ENCODE measurements at regions of chr12 and their contacts with region 1.

Region 1: DNA sequence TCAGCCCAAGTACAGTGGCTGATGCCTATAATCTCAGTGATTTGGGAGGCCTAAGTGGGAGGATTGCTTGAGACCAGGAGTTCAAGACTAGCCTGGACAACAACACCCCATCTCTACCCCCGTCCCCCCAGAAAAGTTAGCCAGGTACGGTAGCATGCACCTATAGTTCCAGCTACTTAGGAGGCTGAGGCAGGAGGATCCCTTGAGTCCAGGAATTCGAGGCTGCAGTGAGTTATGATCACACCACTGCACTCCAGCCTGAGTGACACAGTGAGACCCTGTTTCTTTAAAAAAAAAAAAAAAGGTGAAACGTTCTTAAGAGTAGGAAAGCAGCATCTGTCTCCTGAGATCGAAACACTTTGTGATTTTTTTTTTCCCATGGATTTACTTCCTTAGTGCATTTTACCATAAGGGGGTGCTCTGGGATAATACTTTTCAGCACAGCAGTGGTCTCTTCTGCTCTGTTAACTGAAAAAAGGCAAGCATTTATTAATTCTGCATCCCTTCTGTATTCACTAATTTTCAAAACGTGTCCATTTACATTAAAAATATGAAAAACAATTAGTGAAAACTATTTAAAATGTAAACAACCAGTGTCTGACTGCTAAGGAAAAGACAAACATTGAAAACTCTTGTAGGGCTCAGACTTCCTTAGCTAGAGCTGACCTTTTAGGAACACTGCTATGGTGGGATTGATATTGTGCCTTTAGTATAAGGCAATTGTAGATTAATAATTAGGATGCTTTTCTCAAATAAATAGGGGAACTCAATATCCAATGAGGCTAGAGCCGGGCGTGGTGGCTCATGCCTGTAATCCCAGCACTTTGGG is 31.2 kb upstream of the USP44 start:
- DNase-seq: no peak
- H3K4me3 ChIP-seq: no peak overlapping the region
- H3K27ac ChIP-seq: no peak overlapping the region
- H3K4me1 ChIP-seq: no peaks in the 10 kb centered on the region
- H3K27me3 ChIP-seq: no peaks in the 10 kb centered on the region
- CTCF ChIP-seq: peak in 4 of 6 experiments; percentile 25 to 55 (median 43)
- POLR2A ChIP-seq: no peak

Region 2: DNA sequence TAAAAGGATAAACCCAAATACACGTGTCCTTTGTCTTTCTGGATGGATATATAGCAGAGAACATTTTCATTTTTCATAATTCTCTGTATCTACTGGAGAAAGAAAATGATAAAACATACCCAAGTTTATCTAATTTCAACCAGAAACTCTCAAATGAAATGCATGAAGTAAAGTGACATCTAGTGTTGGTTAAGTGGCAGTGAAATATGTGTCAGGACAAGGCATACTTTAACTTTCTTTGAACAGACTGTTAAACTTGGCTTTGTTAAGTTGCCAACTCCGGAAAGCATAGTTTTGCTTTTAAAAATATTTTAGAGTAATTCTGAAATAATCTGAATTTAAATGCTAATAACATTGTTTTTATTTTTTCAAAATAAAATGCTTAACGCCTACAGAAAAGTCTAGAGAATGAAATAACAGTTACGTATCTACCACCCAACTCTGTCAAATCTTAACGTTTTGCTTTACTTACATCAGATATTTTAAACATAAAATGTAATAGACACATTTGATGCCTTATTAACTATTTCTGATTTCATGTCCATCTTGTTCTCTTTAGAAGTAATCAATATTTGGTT is 233.3 kb after region 1 on chr12:
- intact Hi-C with region 1: loop called (anchors 10 kb)
- DNase-seq: no peak
- H3K4me3 ChIP-seq: no peak overlapping the region
- H3K27ac ChIP-seq: no peak overlapping the region
- H3K4me1 ChIP-seq: no peaks in the 10 kb centered on the region
- H3K27me3 ChIP-seq: no peaks in the 10 kb centered on the region
- CTCF ChIP-seq: peak in 5 of 6 experiments; percentile 32 to 75 (median 66)
- POLR2A ChIP-seq: no peak